Psoas muscle (tissue), 8 donors: ENCODE measurements at regions of chr4 and their contacts with region 1.

Region 1: DNA sequence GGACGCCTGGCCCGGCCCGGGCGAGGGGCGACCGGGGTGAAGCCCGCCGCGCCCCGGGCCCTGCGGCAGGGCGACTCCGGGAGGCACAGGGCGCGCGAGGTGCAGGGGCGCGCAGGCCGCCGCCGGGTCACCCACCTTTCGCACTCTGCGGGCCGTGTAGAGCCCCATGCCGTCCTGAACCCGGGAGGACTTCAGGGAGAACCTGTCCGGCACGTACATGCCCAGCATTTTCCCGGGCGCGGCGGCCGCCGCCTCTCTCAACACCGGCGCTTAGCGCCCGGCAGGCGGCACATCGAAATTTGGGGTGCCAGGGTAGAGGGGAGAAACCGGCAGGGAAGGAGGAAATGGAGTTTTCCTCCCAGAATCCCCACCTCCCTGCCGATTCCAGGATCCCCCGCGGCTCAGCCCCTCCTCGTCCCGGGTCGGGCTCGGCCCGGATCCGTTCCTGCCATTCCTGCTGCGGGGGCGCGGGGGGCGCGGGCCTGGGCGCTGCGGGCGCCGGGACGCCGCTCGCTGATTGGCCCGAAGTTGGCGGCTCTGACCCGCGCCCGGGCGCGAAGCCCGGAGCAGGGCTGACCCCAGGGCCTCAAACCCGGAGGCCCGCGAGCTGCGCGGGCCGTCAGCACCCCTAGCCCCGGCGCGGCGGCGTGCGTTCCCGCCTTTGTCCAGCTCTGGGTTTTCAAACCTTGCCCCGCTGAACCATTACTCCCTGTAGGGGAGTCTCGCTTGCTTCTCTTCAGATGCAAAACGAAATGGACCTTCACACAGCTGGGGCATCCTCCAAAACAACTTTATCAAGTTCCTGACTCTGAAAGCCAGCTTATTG is at the start of gene PRDM5:
- DNase-seq: peak; percentile 72 to 75
- ATAC-seq: peak; percentile 51 to 79 (median 74)
- H3K4me3 ChIP-seq: peak within 1 kb of the TSS; percentile 90
- H3K27ac ChIP-seq: peak within 1 kb of the TSS; percentile 83
- H3K4me1 ChIP-seq: peaks cover 22% of the 10 kb centered on the region
- H3K27me3 ChIP-seq: no peaks in the 10 kb centered on the region
- CTCF ChIP-seq: no peak
- total RNA-seq, gene PRDM5: 2.2 to 3.4 (median 2.6) TPM

Region 2: DNA sequence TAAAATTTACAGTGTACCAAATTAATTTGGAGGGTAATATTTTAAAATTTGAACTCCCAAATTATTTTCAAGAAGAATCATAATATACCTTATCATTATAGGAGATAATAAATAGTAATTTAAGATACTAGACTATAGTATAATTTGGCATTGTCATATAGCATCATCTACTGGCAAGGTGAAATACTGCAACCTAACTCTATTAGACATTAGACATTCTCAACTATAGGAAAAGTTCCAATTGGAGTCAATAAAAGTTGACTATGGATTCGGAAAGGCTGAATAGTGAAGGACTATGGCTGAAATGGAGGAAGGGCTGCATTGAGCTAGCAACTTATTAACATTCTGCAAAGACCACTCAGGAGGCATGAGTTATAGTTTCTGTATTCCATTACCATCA is 113.1 kb before region 1 on chr4:
- intact Hi-C with region 1: no loop called
- DNase-seq: no peak
- ATAC-seq: no peak
- H3K4me3 ChIP-seq: no peak overlapping the region
- H3K27ac ChIP-seq: no peak overlapping the region
- H3K4me1 ChIP-seq: no peaks in the 10 kb centered on the region
- H3K27me3 ChIP-seq: no peaks in the 10 kb centered on the region
- CTCF ChIP-seq: peak; percentile 22

Region 3: GRCh38 chr4:121072224-121073003 is 149.8 kb after region 1 on chr4 and contains the start of gene NDNF:
- intact Hi-C with region 1: loop called in 1 of 2 experiments (anchors 10 kb)
- DNase-seq: peak; percentile 29 to 71
- ATAC-seq: peak; percentile 58 to 78 (median 72)
- H3K4me3 ChIP-seq: peak within 1 kb of the TSS; percentile 69
- H3K27ac ChIP-seq: peak within 1 kb of the TSS; percentile 34
- H3K4me1 ChIP-seq: peaks cover 7% of the 10 kb centered on the region
- H3K27me3 ChIP-seq: peaks cover 0 to 35% (median 4%) of the 10 kb centered on the region in 3 donors
- CTCF ChIP-seq: no peak
- total RNA-seq, gene NDNF: 2.1 to 7.6 (median 5.5) TPM

Region 4: DNA sequence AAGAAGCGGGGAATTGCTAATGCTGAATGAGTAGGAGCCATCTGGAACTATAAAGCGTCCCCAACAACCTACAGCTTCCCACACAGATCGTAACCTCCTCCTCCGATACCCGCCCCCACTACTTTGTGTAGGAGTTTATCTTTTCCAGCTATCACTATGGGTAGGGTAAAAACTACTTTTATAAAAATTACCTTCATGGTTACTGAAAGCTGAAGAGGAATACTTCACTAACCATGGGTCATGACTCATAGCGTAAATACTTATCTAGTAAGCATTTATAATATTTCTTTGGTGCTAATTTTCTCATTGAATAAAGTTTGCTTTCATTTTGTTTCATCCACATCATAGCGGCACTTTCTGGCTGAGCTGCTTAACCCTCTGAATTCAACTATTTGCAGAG is 320.9 kb after region 1 on chr4:
- intact Hi-C with region 1: loop called in 1 of 2 experiments (anchors 5 kb)
- DNase-seq: no peak
- ATAC-seq: no peak
- H3K4me3 ChIP-seq: no peak overlapping the region
- H3K27ac ChIP-seq: no peak overlapping the region
- H3K4me1 ChIP-seq: no peaks in the 10 kb centered on the region
- H3K27me3 ChIP-seq: no peaks in the 10 kb centered on the region
- CTCF ChIP-seq: no peak

Region 5: GRCh38 chr4:121932212-121932974 is 1009.8 kb after region 1 on chr4:
- intact Hi-C with region 1: no loop called
- DNase-seq: peak in 1 of 2 donors; percentile 48
- ATAC-seq: no peak
- H3K4me3 ChIP-seq: no peak overlapping the region
- H3K27ac ChIP-seq: no peak overlapping the region
- H3K4me1 ChIP-seq: no peaks in the 10 kb centered on the region
- H3K27me3 ChIP-seq: peaks cover 0 to 2% (median 0%) of the 10 kb centered on the region in 3 donors
- CTCF ChIP-seq: no peak